ENCODE measurements at regions of chr3 and their contacts with region 1.

Region 1: GRCh38 chr3:59704292-59704691 is 654.5 kb upstream of the CFAP20DC start:
- DNase-seq: no peak
- H3K4me3 Mint-ChIP-seq: no peak overlapping the region
- H3K27ac Mint-ChIP-seq: no peak overlapping the region
- H3K4me1 Mint-ChIP-seq: no peaks in the 10 kb centered on the region
- H3K27me3 Mint-ChIP-seq: no peaks in the 10 kb centered on the region

Region 2: DNA sequence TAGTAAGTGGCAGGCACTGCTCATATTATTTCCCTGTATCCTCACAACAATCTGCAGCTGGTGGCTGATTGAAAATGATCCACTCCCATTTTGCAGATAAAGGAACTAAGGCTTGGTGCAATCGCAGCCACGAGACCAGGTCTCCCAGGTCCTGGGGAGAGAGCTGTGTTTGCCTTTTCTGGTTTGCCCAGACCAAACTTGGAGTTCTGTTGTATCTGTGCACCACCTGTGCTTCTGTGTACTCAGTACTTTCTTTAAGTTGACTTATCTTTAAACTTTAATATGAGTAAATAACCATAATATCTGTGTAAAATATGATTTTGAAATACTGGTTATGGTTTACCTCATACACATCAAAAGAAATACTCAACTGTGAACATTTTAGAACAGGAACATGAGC is 28.8 kb before region 1 on chr3:
- CTCF ChIA-PET with region 1: no interaction called
- intact Hi-C with region 1: loop called (anchors 2 kb)
- DNase-seq: no peak
- H3K4me3 Mint-ChIP-seq: no peak overlapping the region
- H3K27ac Mint-ChIP-seq: no peak overlapping the region
- H3K4me1 Mint-ChIP-seq: no peaks in the 10 kb centered on the region
- H3K27me3 Mint-ChIP-seq: no peaks in the 10 kb centered on the region

Region 3: DNA sequence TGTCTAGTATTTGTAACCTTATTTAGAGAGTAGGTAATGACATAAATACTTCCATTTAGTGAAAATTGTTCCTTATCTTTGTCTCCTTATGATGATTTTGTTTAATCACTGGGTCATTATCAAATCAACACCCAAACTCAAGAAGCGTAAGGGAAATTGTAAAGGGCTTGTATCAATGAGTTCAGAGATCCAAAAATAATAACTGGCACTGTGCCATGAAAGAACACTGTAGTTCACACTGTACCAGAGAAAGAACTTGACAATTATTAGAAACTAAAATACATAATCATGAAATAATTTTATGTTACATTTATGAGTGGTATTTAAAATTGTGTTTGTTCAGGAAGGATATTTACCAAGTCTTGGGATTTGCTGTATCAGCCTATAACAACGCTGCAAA is 651.5 kb after region 1 on chr3:
- CTCF ChIA-PET with region 1: no interaction called
- intact Hi-C with region 1: no loop called
- DNase-seq: no peak
- H3K4me3 Mint-ChIP-seq: no peak overlapping the region
- H3K27ac Mint-ChIP-seq: no peak overlapping the region
- H3K4me1 Mint-ChIP-seq: no peaks in the 10 kb centered on the region
- H3K27me3 Mint-ChIP-seq: no peaks in the 10 kb centered on the region

Measured in activated naive CD4-positive, alpha-beta T cell treated with anti-CD3 and anti-CD28 coated beads for 36 hours (primary cell).